Activated B cell treated with CpG ODN at 0.5 μM for 24 hours (primary cell): ENCODE measurements at regions of chr19 and their contacts with region 1.

Region 1: GRCh38 chr19:57362997-57363705 is at the starts of genes TRAPPC2B and ZNF547:
- DNase-seq: peak; percentile 99
- ATAC-seq: peak; percentile 94
- H3K4me3 Mint-ChIP-seq: peak within 1 kb of the TSS; percentile 92
- H3K27ac Mint-ChIP-seq: peak within 1 kb of the TSS; percentile 95
- H3K4me1 Mint-ChIP-seq: peaks cover 17% of the 10 kb centered on the region
- H3K27me3 Mint-ChIP-seq: no peaks in the 10 kb centered on the region
- CTCF ChIP-seq: no peak
- total RNA-seq, gene TRAPPC2B: 9.7 and 10.2 TPM in 2 replicates
- total RNA-seq, gene ZNF547: 6.0 and 6.3 TPM in 2 replicates

Region 2: DNA sequence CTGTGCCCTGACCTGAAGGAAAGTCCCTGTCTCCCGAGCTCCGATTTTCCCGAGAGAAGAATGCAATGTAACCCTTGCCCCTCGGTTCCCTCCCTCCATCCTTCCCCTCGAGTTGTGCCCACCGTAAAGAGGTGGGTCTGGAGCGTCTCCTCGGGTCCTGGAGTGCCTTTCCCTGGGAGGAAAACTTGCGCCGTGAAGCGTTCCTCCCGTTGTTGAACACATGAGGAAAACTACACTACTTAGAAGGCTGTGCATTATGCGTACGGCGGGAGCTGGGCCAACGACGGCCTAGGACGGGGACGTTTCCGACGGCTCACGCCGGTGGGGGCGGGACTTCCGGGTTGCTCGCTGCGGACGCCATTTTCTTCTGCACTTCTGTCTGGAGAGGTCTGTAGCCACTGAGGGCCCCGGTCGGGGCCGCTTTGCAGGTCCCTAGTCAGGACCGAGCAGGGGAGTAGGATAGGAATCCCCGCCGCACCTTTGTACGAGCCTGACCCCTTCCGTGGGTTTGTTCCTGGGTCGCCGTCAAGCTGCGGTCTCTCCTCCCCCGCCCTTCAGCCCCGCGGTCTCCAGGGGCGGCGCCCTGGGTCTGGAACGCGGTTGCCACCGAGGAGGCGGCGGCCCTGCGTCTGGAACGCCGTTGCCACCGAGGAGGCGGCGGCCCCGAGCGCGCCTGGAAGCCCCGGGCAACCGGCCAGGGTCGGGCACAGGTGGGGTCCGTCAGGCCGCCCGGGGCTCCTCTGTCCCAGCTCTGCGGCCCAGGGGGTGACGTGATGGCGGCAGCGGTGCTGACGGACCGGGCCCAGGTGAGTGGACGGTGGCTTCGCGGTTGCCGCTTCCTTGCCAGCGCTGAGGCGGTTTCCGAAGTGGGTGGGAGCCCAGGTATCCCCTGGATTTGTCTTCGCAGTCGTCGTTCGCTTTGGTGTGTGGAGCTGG is 171.7 kb before region 1 on chr19 and contains the start of gene ZNF264:
- CTCF ChIA-PET with region 1: no interaction called
- POLR2A ChIA-PET with region 1: no interaction called
- intact Hi-C with region 1: loop called (anchors 10 kb)
- DNase-seq: peak; percentile 88
- ATAC-seq: peak; percentile 99
- H3K4me3 Mint-ChIP-seq: peak within 1 kb of the TSS; percentile 92
- H3K27ac Mint-ChIP-seq: peak within 1 kb of the TSS; percentile 94
- H3K4me1 Mint-ChIP-seq: peaks cover 36% of the 10 kb centered on the region
- H3K27me3 Mint-ChIP-seq: peaks cover 5% of the 10 kb centered on the region
- CTCF ChIP-seq: no peak
- total RNA-seq, gene ZNF264: 56.2 and 58.7 TPM in 2 replicates

Region 3: GRCh38 chr19:57320180-57321084 is 42.7 kb before region 1 on chr19 and contains the start of gene ZNF543:
- CTCF ChIA-PET with region 1: no interaction called
- POLR2A ChIA-PET with region 1: interaction called, 5 read pairs
- intact Hi-C with region 1: loop called (anchors 1 kb)
- DNase-seq: peak; percentile 90
- ATAC-seq: peak; percentile 97
- H3K4me3 Mint-ChIP-seq: peak within 1 kb of the TSS; percentile 95
- H3K27ac Mint-ChIP-seq: peak within 1 kb of the TSS; percentile 98
- H3K4me1 Mint-ChIP-seq: peaks cover 30% of the 10 kb centered on the region
- H3K27me3 Mint-ChIP-seq: peaks cover 17% of the 10 kb centered on the region
- CTCF ChIP-seq: no peak
- total RNA-seq, gene ZNF543: 14.0 and 16.1 TPM in 2 replicates

Region 4: DNA sequence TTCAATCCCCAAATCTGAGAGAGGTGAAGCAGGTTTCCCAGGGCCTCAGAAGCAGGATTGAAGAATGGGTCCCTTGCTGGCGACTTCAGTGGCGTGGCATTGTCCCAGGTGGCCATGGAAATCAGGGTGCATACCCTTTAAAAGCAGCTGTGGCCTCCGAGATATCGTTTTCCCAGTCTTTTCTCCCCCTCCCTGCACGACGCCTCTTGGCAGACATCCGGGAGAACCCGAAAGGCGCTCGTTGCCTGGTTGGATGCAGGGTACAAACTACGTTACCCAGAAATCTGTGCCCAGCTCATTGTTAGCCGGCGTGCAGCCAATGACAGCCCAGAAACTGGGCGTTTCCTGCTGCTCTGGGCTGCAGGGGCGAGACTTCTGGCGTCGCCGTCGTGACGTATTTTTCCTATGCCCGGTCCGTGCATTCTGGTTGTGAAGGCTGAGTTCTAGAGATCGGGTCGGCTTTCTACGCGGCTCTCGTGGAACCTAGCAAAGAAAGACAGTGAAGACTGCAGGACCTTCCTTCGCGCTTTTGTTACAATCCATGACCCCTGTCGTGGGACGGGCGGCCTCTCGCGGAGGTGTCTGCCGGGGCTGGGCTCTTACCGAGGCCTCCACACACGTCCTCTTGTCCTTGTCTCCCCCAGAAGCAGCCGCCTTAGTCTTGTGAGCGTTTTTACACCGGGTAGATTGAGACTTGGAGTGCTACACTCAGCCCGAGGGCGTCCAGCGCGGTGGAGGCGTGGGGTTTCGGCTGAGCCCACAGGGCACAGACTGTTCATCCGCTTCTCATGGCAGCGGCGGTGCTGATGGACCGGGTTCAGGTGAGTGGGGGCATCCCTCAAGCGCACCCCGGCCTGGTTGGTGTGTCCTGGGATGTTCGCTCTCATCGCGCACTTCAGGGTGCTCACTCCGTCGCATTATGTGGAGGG is 12.0 kb before region 1 on chr19 and contains the start of gene ZNF304:
- CTCF ChIA-PET with region 1: no interaction called
- POLR2A ChIA-PET with region 1: interaction called, 17 read pairs
- intact Hi-C with region 1: loop called (anchors 1 kb)
- DNase-seq: peak; percentile 66
- ATAC-seq: peak; percentile 100
- H3K4me3 Mint-ChIP-seq: peak within 1 kb of the TSS; percentile 94
- H3K27ac Mint-ChIP-seq: peak within 1 kb of the TSS; percentile 78
- H3K4me1 Mint-ChIP-seq: peaks cover 33% of the 10 kb centered on the region
- H3K27me3 Mint-ChIP-seq: peaks cover 3% of the 10 kb centered on the region
- CTCF ChIP-seq: no peak
- total RNA-seq, gene ZNF304: 12.4 and 13.5 TPM in 2 replicates

Region 5: GRCh38 chr19:57527136-57527881 is 164.2 kb after region 1 on chr19 and contains the start of gene ZNF549:
- CTCF ChIA-PET with region 1: no interaction called
- POLR2A ChIA-PET with region 1: no interaction called
- intact Hi-C with region 1: loop called (anchors 1 kb)
- DNase-seq: peak; percentile 78
- ATAC-seq: peak; percentile 99
- H3K4me3 Mint-ChIP-seq: peak within 1 kb of the TSS; percentile 96
- H3K27ac Mint-ChIP-seq: peak within 1 kb of the TSS; percentile 88
- H3K4me1 Mint-ChIP-seq: peaks cover 24% of the 10 kb centered on the region
- H3K27me3 Mint-ChIP-seq: no peaks in the 10 kb centered on the region
- CTCF ChIP-seq: no peak
- total RNA-seq, gene ZNF549: 14.0 and 16.9 TPM in 2 replicates

Region 6: GRCh38 chr19:57642396-57643046 is 279.4 kb after region 1 on chr19:
- CTCF ChIA-PET with region 1: no interaction called
- POLR2A ChIA-PET with region 1: no interaction called
- intact Hi-C with region 1: no loop called
- DNase-seq: no peak
- ATAC-seq: no peak
- H3K4me3 Mint-ChIP-seq: no peak overlapping the region
- H3K27ac Mint-ChIP-seq: no peak overlapping the region
- H3K4me1 Mint-ChIP-seq: no peaks in the 10 kb centered on the region
- H3K27me3 Mint-ChIP-seq: no peaks in the 10 kb centered on the region
- CTCF ChIP-seq: no peak